Right ventricle myocardium superior (tissue), 1 donor: ENCODE measurements at regions of chr2 and their contacts with region 1.

Region 1: DNA sequence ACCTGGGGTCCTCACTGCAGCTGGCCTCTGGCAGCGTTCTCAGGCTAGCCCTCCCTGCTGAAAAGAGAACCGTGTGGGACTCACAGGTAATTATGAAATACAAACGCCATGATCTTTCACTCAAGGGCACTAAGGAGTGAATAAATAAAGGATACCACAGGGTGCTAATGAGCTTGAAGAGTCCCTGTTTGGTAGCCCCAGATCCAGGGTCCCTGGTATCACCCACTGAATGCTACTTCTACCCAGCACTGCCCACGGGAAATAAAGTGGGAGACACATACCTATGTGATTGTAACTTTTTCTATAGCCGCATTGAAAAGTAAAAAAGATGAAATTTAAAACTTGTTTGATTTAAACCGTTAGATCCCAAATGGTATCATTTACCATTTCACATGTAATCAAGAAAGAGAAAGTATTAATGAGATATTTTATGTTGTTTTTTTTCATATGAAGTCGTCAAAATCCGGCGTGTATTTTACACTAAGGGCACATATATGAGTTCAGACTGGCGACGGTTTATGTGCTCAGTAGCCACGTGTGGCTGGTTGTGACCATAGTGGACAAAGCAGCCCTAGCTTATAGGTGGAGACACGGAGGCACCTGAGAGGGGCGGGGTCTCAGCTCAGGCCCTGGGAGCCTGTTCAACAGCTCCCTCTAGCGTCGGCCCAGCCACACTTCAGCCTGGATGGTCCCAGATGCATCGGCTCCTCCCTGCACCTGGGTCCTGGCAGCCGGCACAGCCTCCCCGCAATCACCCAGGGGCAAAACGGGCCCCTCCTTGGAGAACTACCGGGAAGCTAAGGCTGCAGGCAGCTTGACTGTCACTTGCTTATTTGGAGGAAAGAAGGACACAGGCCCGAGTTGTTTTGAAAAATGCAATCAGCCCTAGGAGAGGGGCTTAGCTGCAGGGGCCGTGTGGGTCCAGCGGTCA is 39.2 kb downstream of the ODC1 start:
- DNase-seq: peak; percentile 88
- ATAC-seq: peak; percentile 73

Region 2: GRCh38 chr2:10144771-10145518 is 264.0 kb before region 1 on chr2:
- intact Hi-C with region 1: loop called (anchors 2 kb)
- DNase-seq: no peak
- ATAC-seq: peak; percentile 49

Region 3: DNA sequence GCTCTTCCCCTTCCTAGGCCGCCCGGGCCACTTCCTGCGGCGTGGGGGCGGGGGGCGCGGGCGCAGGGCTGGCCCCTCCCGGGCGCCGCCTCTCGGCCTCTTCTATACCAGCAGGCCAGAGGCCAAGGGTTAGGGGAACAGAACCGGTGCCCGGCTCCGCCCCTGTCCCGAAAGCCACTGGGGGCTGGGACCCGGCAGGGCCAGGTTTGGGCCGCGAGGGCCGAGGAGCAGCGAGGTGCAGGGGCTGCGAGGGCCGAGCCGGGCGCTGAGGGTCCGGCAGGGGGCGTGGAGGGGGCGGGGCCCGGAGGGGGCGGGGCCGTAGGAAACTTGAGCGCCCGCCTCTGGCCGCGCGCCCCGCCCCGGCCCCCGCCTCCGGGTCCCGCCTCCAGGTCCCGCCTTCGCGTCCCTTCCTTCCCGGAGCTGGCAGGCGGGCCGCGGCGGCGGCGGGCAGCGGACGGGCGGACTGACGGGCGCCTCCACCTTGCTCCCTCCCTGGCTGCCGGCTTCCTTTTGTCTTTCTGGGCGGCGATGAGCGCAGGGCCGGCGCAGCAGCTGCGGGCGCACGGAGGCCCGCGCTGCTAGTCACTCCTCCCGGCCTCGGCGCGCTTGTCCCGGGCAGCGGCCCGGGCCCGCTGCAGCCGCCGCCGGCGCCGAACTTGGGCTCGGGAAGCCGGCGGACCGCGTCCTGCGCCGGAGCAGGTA is 106.3 kb before region 1 on chr2 and contains the start of gene HPCAL1:
- intact Hi-C with region 1: loop called (anchors 5 kb)
- DNase-seq: peak; percentile 93
- ATAC-seq: peak; percentile 96
- total RNA-seq, gene HPCAL1: 34.3 TPM